Mammary epithelial cell (primary cell): ENCODE measurements at regions of chr11 and their contacts with region 1.

Region 1: DNA sequence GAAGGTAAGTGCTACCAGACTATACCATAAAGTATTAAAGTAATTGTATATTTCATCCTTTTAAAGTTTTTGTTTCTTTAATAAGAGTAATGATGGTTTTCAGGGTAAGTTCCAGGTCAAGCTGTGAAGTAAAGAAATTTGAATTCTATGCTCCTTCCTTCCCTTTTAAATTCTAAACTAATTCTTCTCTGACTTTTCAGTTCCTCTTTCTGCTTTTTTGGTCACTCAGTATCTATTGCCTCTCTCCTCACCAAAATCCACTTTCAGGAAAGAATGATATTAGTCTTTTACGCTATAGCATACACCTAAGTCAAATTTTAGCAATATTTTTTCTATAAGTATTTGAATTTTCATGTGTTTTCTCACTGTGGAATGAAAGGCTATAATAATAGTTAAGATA is 8.2 kb downstream of the MMP8 start:
- DNase-seq: no peak
- H3K4me3 ChIP-seq: no peak overlapping the region
- H3K27ac ChIP-seq: no peak overlapping the region
- H3K4me1 ChIP-seq: peaks cover 1% of the 10 kb centered on the region
- H3K27me3 ChIP-seq: no peaks in the 10 kb centered on the region
- CTCF ChIP-seq: no peak

Region 2: GRCh38 chr11:102420547-102420946 is 296.0 kb before region 1 on chr11:
- CTCF ChIA-PET with region 1: no interaction called
- dilution Hi-C with region 1: no loop called
- in situ Hi-C with region 1: no loop called
- intact Hi-C with region 1: no loop called
- DNase-seq: no peak
- H3K4me3 ChIP-seq: no peak overlapping the region
- H3K27ac ChIP-seq: no peak overlapping the region
- H3K4me1 ChIP-seq: peaks cover 8% of the 10 kb centered on the region
- H3K27me3 ChIP-seq: no peaks in the 10 kb centered on the region
- CTCF ChIP-seq: no peak

Region 3: GRCh38 chr11:102680945-102681344 is 35.6 kb before region 1 on chr11:
- CTCF ChIA-PET with region 1: no interaction called
- dilution Hi-C with region 1: loop called (anchors 5 kb)
- in situ Hi-C with region 1: no loop called
- intact Hi-C with region 1: no loop called
- DNase-seq: peak; percentile 24
- H3K4me3 ChIP-seq: no peak overlapping the region
- H3K27ac ChIP-seq: no peak overlapping the region
- H3K4me1 ChIP-seq: peaks cover 14% of the 10 kb centered on the region
- H3K27me3 ChIP-seq: no peaks in the 10 kb centered on the region
- CTCF ChIP-seq: no peak

Region 4: GRCh38 chr11:102771351-102771750 is 54.8 kb after region 1 on chr11:
- CTCF ChIA-PET with region 1: no interaction called
- dilution Hi-C with region 1: no loop called
- in situ Hi-C with region 1: no loop called
- intact Hi-C with region 1: no loop called
- DNase-seq: no peak
- H3K4me3 ChIP-seq: no peak overlapping the region
- H3K27ac ChIP-seq: no peak overlapping the region
- H3K4me1 ChIP-seq: peaks cover 9% of the 10 kb centered on the region
- H3K27me3 ChIP-seq: no peaks in the 10 kb centered on the region
- CTCF ChIP-seq: no peak